GM18951 (cell line): ENCODE measurements at regions of chr7 and their contacts with region 1.

Region 1: GRCh38 chr7:35816514-35816913 is 15.7 kb downstream of the SEPTIN7 start:
- POLR2A ChIP-seq: no peak

Region 2: GRCh38 chr7:34845666-34846361 is 970.7 kb before region 1 on chr7:
- in situ Hi-C with region 1: no loop called
- POLR2A ChIP-seq: no peak

Region 3: GRCh38 chr7:35716038-35716803 is 100.3 kb before region 1 on chr7:
- in situ Hi-C with region 1: loop called (anchors 10 kb)
- POLR2A ChIP-seq: no peak

Region 4: DNA sequence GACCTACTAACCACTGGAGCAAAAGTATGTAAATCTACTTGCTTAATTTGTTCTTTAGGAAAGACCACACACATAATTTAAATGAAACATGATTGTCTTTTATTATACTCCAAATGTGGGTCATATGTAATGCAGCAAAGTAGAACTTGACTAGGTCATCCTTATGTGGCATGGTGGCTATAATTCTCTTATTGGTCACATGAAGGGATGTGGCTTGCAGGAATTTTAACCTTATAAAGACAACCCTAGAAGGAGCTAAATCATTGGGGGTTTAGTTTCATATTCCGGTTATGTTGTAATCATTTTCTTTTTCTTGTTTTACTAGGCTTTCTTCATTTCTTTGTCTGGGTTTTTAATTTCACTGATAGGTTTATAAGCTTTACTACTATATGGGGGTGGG is 78.2 kb after region 1 on chr7:
- in situ Hi-C with region 1: no loop called
- POLR2A ChIP-seq: no peak

Region 5: DNA sequence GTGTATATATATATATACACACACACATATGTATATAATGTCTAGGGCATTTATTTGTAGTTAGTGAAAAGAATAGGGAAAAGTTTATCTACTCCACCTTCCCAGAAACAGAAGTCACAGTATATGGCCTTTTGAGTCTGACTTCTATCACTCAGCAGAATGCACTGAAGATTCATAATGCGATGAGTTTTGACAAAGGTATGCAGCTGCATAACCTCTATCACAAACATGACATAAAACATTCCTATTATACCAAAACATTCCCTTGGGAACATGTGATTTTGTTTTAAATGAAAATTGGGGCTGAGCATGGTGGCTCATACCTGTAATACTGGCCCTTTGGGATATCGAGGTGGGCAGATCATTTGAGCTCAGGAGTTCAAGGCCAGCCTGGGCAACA is 199.2 kb after region 1 on chr7:
- in situ Hi-C with region 1: no loop called
- POLR2A ChIP-seq: no peak

Region 6: DNA sequence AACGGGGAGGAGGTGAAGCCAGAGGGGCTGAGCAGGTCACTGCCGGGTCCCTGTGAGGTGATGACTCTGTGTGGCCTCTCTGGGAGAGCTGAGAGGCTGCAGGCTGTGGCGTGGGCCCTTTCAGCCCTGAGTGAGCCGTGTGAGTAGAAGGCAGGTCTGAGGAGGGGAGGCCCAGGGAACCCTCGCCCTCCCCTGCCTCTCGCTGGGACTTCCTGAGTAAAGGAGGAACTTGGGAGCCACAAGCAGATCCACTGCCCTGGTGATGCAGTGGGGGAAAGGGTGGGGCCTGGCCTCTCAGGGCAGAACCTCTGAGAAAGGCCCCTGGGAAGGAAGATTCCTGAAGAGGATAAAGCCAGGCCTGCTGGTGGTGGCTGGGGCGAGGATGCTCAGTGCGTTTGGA is 359.4 kb after region 1 on chr7:
- in situ Hi-C with region 1: no loop called
- POLR2A ChIP-seq: no peak